ENCODE measurements at regions of chr5 and their contacts with region 1.

Region 1: DNA sequence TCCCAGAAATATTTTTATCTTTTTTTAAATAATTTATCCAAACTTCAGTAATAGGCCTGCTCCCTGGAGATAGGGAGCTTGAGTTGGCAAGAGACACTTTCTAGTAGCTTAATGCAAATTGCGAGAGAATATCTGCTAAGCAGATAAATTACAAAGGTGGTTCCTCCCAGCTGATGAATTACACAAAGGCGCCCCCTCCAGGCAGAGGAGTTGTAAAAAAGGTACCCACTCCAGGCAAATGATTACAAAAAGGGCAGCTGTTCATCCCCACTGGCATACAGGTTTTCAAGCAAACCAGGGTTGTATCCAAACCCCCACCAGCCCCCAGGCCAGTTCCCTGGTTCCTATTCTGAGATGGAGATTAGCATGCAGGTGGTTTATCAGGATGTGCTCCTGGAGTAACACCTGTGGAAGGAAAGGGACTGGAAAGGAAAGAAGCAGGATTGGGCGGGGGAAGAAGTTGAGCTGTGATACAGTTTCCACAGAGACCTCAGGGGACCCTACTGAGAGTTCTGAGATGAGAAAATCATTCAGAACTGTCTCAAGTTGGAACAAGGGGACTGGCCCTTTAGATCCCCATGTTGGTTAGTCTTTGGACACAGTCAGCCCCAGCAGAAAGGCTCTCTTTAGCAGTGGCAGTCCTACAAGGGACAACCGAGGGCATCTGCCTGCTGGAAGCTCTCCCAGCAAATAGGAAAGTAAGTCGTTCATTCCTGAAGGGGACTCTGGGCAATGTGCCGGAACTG is 25.5 kb downstream of the ESM1 start:
- DNase-seq: peak; percentile 71
- ATAC-seq: peak; percentile 79
- H3K4me3 Mint-ChIP-seq: no peak overlapping the region
- H3K27ac Mint-ChIP-seq: no peak overlapping the region
- H3K4me1 Mint-ChIP-seq: no peaks in the 10 kb centered on the region
- H3K27me3 Mint-ChIP-seq: peaks cover 15% of the 10 kb centered on the region
- CTCF ChIP-seq: peak; percentile 33

Region 2: DNA sequence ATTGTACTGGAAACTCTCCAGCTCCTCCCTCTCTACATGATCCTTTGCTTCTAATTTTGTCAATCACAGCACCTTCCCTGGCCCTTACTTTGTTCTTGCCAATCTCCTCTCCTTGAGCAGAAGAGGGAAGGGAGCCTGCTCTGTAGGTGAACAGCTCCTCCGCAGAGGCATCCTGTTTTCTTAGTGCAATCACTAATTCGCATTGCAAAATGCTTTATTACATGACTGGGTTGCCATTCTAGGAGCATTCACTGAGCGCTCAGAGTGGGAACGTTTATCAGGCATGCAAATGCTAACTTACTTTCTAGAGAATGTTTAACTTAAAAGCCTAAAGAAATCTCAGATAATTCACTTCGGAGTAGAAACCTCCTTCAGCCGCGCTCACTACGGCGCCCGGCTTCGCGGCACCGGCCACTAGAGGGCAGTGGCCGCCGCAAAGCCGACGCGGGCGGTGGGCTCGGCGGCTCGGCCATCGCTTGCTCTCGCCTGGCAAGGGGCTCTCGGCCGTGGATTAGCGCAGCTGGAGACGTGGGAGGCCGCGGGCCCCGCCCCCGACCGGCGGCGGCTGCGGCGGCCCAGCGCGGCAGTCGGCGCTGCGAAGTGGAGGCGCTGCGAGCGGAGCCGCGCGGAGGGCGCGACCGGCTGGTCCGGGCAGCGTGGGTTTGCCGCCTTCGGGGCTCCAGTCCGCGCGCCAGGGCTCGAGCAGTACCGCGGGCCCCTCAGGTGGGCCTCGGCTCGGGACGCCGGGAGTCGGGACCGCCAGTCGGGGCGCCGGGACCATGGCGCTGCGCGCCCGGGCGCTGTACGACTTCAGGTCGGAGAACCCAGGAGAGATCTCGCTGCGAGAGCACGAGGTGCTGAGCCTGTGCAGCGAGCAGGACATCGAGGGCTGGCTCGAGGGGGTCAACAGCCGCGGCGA is 442.4 kb before region 1 on chr5 and contains the start of gene SNX18:
- CTCF ChIA-PET with region 1: interaction called, 10 read pairs
- POLR2A ChIA-PET with region 1: no interaction called
- DNase-seq: peak; percentile 88
- ATAC-seq: peak; percentile 62
- H3K4me3 Mint-ChIP-seq: peak within 1 kb of the TSS; percentile 70
- H3K27ac Mint-ChIP-seq: no peak within 1 kb of the TSS
- H3K4me1 Mint-ChIP-seq: peaks cover 34% of the 10 kb centered on the region
- H3K27me3 Mint-ChIP-seq: peaks cover 14% of the 10 kb centered on the region
- CTCF ChIP-seq: peak; percentile 85
- total RNA-seq, gene SNX18: 20.3 to 24.6 TPM (median 23.6 TPM) in 3 replicates

Region 3: DNA sequence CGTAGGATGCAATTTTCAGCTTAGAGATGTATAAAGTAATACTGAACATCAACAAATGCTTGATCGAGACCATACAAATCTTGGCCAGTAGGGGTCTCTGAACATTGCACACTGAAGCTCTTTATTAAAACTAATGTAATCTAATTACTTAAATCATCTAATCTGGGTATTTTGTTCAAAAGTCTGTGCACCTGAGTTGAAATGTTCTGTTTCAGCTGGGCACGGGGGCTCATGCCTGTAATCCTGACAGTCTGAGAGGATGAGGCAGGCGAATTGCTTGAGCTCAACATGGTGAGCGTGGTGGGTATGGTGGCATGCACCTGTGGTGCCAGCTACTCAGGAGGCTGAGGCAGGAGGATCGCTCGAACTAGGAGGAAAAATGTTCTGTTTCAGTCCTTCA is 15.5 kb before region 1 on chr5:
- CTCF ChIA-PET with region 1: interaction called, 75 read pairs
- POLR2A ChIA-PET with region 1: no interaction called
- DNase-seq: no peak
- ATAC-seq: peak; percentile 34; the same call in 1 of the 2 replicates
- H3K4me3 Mint-ChIP-seq: no peak overlapping the region
- H3K27ac Mint-ChIP-seq: no peak overlapping the region
- H3K4me1 Mint-ChIP-seq: peaks cover 12% of the 10 kb centered on the region
- H3K27me3 Mint-ChIP-seq: no peaks in the 10 kb centered on the region; the same call in 1 of the 2 replicates
- CTCF ChIP-seq: peak; percentile 65; the same call in 1 of the 2 replicates

Region 4: GRCh38 chr5:54975701-54976100 is 15.9 kb after region 1 on chr5:
- CTCF ChIA-PET with region 1: interaction called, 23 read pairs
- POLR2A ChIA-PET with region 1: no interaction called
- DNase-seq: no peak
- ATAC-seq: no peak
- H3K4me3 Mint-ChIP-seq: no peak overlapping the region
- H3K27ac Mint-ChIP-seq: no peak overlapping the region
- H3K4me1 Mint-ChIP-seq: no peaks in the 10 kb centered on the region
- H3K27me3 Mint-ChIP-seq: no peaks in the 10 kb centered on the region
- CTCF ChIP-seq: no peak

Region 5: DNA sequence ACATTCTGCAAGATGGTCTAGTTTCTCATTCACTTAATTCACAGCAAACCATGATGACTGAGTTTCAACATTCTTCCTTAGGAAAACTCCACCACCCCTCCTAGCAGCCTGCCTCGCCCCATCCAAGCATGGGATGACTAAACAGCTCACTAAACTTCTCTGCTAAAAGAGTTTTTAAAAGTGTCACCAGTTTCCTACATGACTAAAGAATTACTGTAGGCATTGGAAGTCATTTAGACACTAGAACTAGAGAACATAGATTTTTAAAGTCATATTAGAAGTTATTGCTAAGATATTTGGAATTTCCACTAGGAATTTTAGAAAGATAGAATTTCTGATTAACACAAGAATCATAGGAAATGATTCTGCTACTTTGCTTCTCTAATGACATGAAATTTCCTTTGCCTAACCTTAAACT is 31.0 kb after region 1 on chr5:
- CTCF ChIA-PET with region 1: interaction called, 14 read pairs
- POLR2A ChIA-PET with region 1: no interaction called
- DNase-seq: no peak
- ATAC-seq: no peak
- H3K4me3 Mint-ChIP-seq: no peak overlapping the region
- H3K27ac Mint-ChIP-seq: no peak overlapping the region
- H3K4me1 Mint-ChIP-seq: peaks cover 61% of the 10 kb centered on the region
- H3K27me3 Mint-ChIP-seq: peaks cover 52% of the 10 kb centered on the region
- CTCF ChIP-seq: no peak

Region 6: DNA sequence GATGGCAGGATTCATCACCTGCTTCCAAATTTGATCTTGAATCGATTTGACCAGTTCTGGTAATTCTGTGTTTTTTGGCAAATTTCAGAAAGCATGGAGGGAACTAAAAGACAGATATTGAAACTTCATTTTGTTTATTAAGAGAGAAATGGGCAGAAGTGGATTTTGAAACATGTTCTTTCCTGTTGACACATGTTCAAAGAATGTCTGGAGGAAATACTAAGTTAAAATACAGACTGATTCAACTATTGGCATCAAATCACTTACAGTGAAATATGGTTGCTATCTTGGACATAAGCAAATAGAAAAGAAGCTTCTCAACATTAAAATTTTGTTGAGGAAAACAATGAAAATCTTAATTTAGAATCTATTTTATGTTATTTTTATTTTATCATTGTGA is 44.9 kb after region 1 on chr5:
- CTCF ChIA-PET with region 1: no interaction called
- POLR2A ChIA-PET with region 1: no interaction called
- DNase-seq: no peak
- ATAC-seq: no peak
- H3K4me3 Mint-ChIP-seq: no peak overlapping the region
- H3K27ac Mint-ChIP-seq: no peak overlapping the region
- H3K4me1 Mint-ChIP-seq: no peaks in the 10 kb centered on the region
- H3K27me3 Mint-ChIP-seq: peaks cover 4% of the 10 kb centered on the region; the same call in 1 of the 2 replicates
- CTCF ChIP-seq: no peak

Region 7: GRCh38 chr5:55146543-55147151 is 186.8 kb after region 1 on chr5:
- CTCF ChIA-PET with region 1: interaction called, 21 read pairs
- POLR2A ChIA-PET with region 1: interaction called, 3 read pairs
- DNase-seq: peak; percentile 92
- ATAC-seq: peak; percentile 97
- H3K4me3 Mint-ChIP-seq: peak overlapping the region; percentile 40; the same call in 1 of the 2 replicates
- H3K27ac Mint-ChIP-seq: no peak overlapping the region; the same call in 1 of the 2 replicates
- H3K4me1 Mint-ChIP-seq: peaks cover 7% of the 10 kb centered on the region
- H3K27me3 Mint-ChIP-seq: no peaks in the 10 kb centered on the region; the same call in none of the 2 replicates
- CTCF ChIP-seq: peak; percentile 80